ENCODE measurements at regions of chr7 and their contacts with region 1.

Region 1: DNA sequence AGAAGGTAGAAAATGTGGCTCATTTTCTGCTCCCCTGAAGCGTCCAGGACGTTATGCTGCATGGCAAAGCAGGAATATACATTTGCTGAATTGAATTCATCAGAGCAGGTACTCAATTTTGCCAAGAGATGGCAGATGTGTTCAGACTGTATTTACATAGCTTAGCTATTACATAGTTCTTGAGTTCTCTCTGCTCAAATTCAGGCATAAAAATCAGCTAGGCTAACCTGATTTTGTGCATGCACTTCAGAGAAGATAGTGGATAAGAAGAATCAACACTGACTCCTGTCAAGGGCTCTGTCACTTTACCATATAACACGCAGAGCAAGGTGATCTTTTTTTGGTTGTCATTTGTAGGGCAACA is 209.2 kb upstream of the FAM3C start:
- DNase-seq: peak in 1 of 3 donors; percentile 11
- ATAC-seq: peak; percentile 58
- H3K4me3 ChIP-seq: no peak overlapping the region
- H3K4me1 ChIP-seq: no peaks in the 10 kb centered on the region
- CTCF ChIP-seq: no peak

Region 2: GRCh38 chr7:121493553-121493952 is 111.7 kb before region 1 on chr7:
- intact Hi-C with region 1: no loop called
- DNase-seq: no peak
- ATAC-seq: no peak
- H3K4me3 ChIP-seq: no peak overlapping the region
- H3K4me1 ChIP-seq: no peaks in the 10 kb centered on the region
- CTCF ChIP-seq: no peak

Region 3: DNA sequence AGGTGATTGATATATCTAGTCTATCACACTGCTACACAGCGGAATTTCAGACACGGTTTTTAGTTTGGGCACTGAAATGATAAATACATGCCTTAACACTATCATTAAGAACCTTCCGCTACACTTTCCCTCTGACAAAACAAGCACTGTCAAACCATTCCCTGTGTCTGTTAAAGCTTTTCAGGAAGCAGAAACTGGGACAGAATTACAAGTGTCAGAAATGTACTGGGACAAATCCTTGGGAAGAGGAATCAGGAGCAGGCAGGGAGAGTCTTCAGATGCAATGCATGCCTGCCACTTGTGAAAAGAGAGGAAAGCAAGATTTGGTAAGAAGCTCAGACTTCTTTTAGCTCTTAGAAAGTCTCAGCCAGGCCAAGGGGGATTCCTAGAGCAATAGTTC is 70.9 kb after region 1 on chr7:
- intact Hi-C with region 1: no loop called
- DNase-seq: no peak
- ATAC-seq: no peak
- H3K4me3 ChIP-seq: no peak overlapping the region
- H3K4me1 ChIP-seq: no peaks in the 10 kb centered on the region
- CTCF ChIP-seq: no peak

Region 4: DNA sequence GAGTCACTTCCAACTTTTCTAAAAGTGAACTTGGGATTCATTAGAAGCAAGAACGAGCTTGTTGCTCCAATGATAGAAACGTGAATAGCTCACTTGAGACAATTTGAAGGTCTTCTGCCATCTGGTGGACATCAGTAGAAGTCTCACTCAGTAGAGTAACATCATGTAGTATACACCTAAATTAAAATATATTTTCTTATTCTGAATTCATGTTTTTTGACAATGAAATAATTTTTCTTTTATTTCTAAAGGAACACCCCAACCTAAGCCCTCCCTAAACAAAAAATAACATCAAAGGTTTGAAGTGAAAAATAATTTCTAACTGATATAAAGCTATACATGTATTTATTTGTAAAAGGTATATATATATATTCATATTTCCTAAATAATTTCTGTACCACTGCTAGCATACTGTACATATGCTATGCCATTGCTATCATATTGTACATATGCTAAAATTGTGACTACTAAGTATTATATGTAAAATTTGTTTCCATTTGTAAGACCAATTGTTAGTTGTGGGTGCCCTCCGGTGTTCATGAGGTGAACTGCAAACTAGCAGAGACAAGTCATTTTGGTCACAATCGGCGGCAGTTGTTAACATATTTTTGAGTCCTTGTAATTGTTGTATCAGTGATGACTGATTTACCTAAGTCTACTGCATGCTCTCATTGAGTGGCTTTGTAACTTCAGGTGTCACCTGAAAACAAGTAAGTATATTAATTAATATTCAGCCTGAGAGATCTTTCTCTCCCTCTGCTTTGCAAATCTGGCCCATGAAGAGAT is 389.5 kb after region 1 on chr7:
- intact Hi-C with region 1: loop called in 1 of 2 experiments (anchors 10 kb)
- DNase-seq: peak in 2 of 3 donors; percentile 36 to 77
- ATAC-seq: peak; percentile 84
- H3K4me3 ChIP-seq: no peak overlapping the region
- H3K4me1 ChIP-seq: no peaks in the 10 kb centered on the region
- CTCF ChIP-seq: peak; percentile 32

Measured in mucosa of descending colon (tissue), 3 donors.